Sciatic nerve (tissue), 2 donors: ENCODE measurements at regions of chr1 and their contacts with region 1.

Region 1: DNA sequence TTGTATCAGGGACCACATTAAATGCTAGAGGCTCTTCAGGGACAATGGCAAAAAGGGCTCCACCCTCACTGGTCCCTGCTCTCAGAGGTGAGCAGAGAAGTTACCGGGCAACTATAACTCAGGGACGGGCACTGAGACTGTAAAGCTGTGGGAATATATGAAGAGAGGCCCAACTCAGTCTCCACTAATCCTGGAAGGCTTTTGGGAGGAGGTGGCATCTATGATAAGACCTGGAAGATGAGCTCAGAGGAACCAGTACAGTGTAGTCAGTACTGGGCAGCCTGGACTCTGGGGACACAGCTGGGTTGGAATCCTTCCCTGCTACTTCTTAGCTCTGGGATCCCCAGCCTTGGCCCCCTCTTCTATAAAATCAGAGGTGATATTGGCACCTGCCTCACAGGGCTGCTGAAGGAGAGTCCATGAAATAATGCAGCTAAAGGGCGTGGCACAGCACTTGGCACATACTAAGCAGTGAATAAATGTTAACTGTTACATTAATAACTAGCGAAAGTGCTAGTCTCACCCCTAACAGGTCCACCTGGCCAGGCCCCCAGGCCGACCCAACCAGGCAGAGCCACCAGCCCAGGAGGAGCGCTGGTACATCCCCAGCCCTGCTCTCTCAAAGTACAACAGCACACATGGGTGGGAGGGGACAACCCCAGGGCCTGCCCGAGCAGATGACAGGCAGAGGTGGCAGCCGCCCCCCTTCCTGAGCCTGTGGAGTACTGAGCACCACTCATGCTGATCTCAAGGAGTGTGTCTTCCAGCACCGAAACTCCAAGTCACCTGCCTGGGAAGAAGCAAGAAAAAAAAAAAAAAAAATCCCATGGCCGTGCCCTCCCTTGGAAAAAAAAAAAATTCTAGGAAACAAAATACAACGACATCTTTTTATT is 62.7 kb downstream of the CASZ1 start:
- DNase-seq: no peak
- ATAC-seq: no peak

Region 2: GRCh38 chr1:10710494-10710893 is 23.2 kb before region 1 on chr1:
- intact Hi-C with region 1: loop called (anchors 1 kb)
- DNase-seq: no peak
- ATAC-seq: no peak